ENCODE measurements at regions of chr16 and their contacts with region 1.

Region 1: GRCh38 chr16:79601931-79602627 is 1.5 kb upstream of the MAF start:
- DNase-seq: peak; percentile 79
- H3K4me3 ChIP-seq: peak overlapping the region; percentile 76 to 94
- H3K27ac ChIP-seq: peak overlapping the region; percentile 87 to 92
- H3K4me1 ChIP-seq: no peaks in the 10 kb centered on the region
- H3K27me3 ChIP-seq: no peaks in the 10 kb centered on the region
- CTCF ChIP-seq: peak; percentile 72 to 89 (median 79)
- POLR2A ChIP-seq: no peak

Region 2: GRCh38 chr16:78122774-78123315 is 1479.2 kb before region 1 on chr16:
- intact Hi-C with region 1: loop called (anchors 5 kb)
- DNase-seq: peak; percentile 75
- H3K4me3 ChIP-seq: no peak overlapping the region
- H3K27ac ChIP-seq: peak overlapping the region; percentile 82 to 86
- H3K4me1 ChIP-seq: no peaks in the 10 kb centered on the region
- H3K27me3 ChIP-seq: no peaks in the 10 kb centered on the region
- CTCF ChIP-seq: peak in 3 of 4 experiments; percentile 64 to 84 (median 81)
- POLR2A ChIP-seq: no peak

Region 3: DNA sequence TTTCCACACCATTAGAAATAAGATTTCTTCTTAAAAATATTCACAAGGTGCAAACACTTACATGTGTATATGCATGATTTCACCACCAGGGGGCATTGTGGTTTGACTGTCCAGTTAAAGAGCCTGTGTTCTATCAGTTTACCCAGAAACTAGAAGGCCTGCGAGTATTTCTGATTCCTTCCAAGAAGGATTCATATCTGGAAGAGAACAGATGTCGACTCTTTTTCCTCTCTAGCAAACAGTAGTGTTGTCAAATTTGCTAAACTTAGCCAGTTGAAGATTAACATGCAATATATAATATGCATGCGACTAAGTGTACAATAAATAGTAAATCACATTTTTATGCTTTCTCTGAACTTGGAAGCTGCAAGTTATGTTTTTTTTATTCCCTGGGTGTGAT is 1098.5 kb before region 1 on chr16:
- intact Hi-C with region 1: loop called (anchors 5 kb)
- DNase-seq: peak; percentile 68
- H3K4me3 ChIP-seq: no peak overlapping the region
- H3K27ac ChIP-seq: no peak overlapping the region
- H3K4me1 ChIP-seq: peaks cover 10% of the 10 kb centered on the region
- H3K27me3 ChIP-seq: no peaks in the 10 kb centered on the region
- CTCF ChIP-seq: peak; percentile 82 to 92 (median 86)
- POLR2A ChIP-seq: no peak

Region 4: GRCh38 chr16:79721270-79721669 is 119.2 kb after region 1 on chr16:
- intact Hi-C with region 1: loop called (anchors 10 kb)
- DNase-seq: peak; percentile 30
- H3K4me3 ChIP-seq: no peak overlapping the region
- H3K27ac ChIP-seq: peak overlapping the region; percentile 7 to 43
- H3K4me1 ChIP-seq: peaks cover 13% of the 10 kb centered on the region
- H3K27me3 ChIP-seq: no peaks in the 10 kb centered on the region
- CTCF ChIP-seq: no peak
- POLR2A ChIP-seq: no peak

Region 5: DNA sequence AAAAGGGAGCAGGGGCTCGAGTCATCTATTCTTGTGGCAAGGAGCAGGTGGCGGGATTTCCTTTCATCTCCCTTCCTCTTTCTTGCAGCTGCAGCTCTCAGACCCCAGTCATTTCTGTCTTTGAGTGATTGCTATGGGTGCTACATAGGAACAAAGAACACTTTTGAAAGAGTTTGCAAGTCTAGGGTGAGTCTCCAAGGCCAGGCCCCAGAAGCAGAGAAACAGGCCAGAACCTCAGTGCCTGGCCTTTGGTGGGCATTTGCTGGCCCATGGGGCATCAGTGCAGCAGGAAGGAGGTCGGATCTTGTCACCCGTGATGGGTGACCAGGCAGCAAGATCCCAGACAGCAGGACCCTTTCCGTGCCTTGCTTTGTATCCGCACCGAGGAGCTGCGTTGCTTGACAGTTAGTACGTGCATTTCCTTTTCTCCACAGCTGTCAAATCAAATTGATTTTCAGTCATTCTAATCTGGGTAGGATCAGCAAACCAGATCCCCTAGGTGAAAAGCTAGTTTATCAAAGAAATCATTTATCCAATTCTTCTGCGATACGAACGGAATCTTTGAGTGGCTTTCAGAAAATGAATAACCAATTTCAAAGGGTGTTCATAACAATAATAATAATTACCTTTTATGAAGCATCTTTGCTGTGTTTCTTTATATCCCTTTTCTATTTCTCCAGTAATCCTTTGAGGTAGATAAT is 243.1 kb after region 1 on chr16:
- intact Hi-C with region 1: loop called (anchors 10 kb)
- DNase-seq: no peak
- H3K4me3 ChIP-seq: no peak overlapping the region
- H3K27ac ChIP-seq: no peak overlapping the region
- H3K4me1 ChIP-seq: peaks cover 5% of the 10 kb centered on the region
- H3K27me3 ChIP-seq: no peaks in the 10 kb centered on the region
- CTCF ChIP-seq: no peak
- POLR2A ChIP-seq: no peak

Region 6: DNA sequence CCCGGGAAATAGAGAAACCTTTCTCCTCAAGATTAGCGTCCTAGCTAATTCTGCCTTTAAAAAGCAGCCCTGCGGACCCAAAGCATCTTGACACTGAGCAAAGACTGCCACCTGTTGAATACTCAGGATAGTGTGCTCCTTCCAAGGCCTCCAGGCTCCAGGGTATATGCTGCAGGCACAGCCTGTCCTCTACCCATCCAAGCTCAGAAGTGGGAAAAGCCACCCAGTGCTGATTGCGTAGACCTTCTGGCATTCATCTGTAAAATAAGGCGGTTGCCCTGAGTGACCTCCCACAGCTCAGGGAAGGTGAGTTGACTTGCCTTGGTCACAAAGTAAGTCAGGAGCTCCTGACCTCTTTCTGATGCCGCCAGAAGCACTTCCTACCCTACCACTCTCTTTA is 482.6 kb after region 1 on chr16:
- intact Hi-C with region 1: loop called (anchors 5 kb)
- DNase-seq: peak; percentile 58
- H3K4me3 ChIP-seq: no peak overlapping the region
- H3K27ac ChIP-seq: no peak overlapping the region
- H3K4me1 ChIP-seq: no peaks in the 10 kb centered on the region
- H3K27me3 ChIP-seq: no peaks in the 10 kb centered on the region
- CTCF ChIP-seq: peak; percentile 45 to 75 (median 60)
- POLR2A ChIP-seq: no peak

Region 7: GRCh38 chr16:80526425-80527061 is 924.5 kb after region 1 on chr16:
- intact Hi-C with region 1: loop called (anchors 10 kb)
- DNase-seq: peak; percentile 50
- H3K4me3 ChIP-seq: no peak overlapping the region
- H3K27ac ChIP-seq: no peak overlapping the region
- H3K4me1 ChIP-seq: no peaks in the 10 kb centered on the region
- H3K27me3 ChIP-seq: no peaks in the 10 kb centered on the region
- CTCF ChIP-seq: peak; percentile 28 to 78 (median 62)
- POLR2A ChIP-seq: no peak